PC-3 (cell line): ENCODE measurements at regions of chr6 and their contacts with region 1.

Region 1: DNA sequence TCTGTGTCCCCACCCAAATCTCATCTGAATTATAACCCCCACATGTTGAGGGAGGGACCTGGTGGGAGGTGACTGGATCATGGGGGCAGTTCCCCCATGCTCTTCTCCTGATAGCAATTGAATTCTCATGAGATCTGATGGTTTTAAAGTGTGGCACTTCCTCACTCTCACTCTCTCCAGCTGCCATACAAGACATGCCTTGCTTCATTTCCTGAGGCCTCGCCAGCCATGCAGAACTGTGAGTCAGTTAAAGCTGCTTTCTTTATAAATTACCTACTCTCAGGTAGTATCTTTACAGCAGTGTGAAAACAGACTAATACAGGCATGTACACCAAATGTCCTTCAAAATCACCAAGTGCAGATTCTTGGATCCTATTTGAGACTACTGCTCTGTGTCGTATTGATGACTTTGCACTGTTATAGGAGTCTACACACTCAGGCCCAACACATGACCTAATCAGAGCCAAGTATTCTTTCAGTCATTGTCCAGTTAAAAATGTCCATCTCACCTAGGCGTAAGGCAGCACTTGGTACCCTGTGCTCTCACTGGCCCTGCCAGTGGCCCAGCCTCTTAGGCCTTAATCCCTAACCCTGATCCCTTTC is 52.8 kb upstream of the UST start:
- DNase-seq: no peak
- ATAC-seq: no peak
- H3K4me3 ChIP-seq: no peak overlapping the region
- H3K27ac ChIP-seq: no peak overlapping the region
- H3K4me1 ChIP-seq: no peaks in the 10 kb centered on the region
- H3K27me3 ChIP-seq: no peaks in the 10 kb centered on the region
- CTCF ChIP-seq: no peak

Region 2: GRCh38 chr6:148987982-148988381 is 294.0 kb after region 1 on chr6:
- CTCF ChIA-PET with region 1: interaction called, 12 read pairs
- POLR2A ChIA-PET with region 1: no interaction called
- intact Hi-C with region 1: no loop called
- DNase-seq: no peak
- ATAC-seq: no peak
- H3K4me3 ChIP-seq: no peak overlapping the region
- H3K27ac ChIP-seq: no peak overlapping the region
- H3K4me1 ChIP-seq: no peaks in the 10 kb centered on the region
- H3K27me3 ChIP-seq: no peaks in the 10 kb centered on the region
- CTCF ChIP-seq: no peak